Activated CD4-positive, alpha-beta memory T cell treated with anti-CD3 and anti-CD28 coated beads, Interleukin-2, amount 10 ng/mL, durations not matched to agents 7 days and 5 days (primary cell): ENCODE measurements at regions of chr6 and their contacts with region 1.

Region 1: GRCh38 chr6:26216356-26216885 is 129.2 kb downstream of the HFE start:
- DNase-seq: peak; percentile 90
- H3K4me3 Mint-ChIP-seq: no peak overlapping the region
- H3K27ac Mint-ChIP-seq: no peak overlapping the region
- H3K4me1 Mint-ChIP-seq: peaks cover 28% of the 10 kb centered on the region
- H3K27me3 Mint-ChIP-seq: no peaks in the 10 kb centered on the region

Region 2: GRCh38 chr6:26031595-26032339 is 184.7 kb before region 1 on chr6:
- CTCF ChIA-PET with region 1: interaction called, 3 read pairs
- POLR2A ChIA-PET with region 1: interaction called, 39 read pairs
- DNase-seq: peak; percentile 92
- H3K4me3 Mint-ChIP-seq: peak overlapping the region; percentile 84
- H3K27ac Mint-ChIP-seq: peak overlapping the region; percentile 100
- H3K4me1 Mint-ChIP-seq: peaks cover 74% of the 10 kb centered on the region
- H3K27me3 Mint-ChIP-seq: peaks cover 4% of the 10 kb centered on the region

Region 3: DNA sequence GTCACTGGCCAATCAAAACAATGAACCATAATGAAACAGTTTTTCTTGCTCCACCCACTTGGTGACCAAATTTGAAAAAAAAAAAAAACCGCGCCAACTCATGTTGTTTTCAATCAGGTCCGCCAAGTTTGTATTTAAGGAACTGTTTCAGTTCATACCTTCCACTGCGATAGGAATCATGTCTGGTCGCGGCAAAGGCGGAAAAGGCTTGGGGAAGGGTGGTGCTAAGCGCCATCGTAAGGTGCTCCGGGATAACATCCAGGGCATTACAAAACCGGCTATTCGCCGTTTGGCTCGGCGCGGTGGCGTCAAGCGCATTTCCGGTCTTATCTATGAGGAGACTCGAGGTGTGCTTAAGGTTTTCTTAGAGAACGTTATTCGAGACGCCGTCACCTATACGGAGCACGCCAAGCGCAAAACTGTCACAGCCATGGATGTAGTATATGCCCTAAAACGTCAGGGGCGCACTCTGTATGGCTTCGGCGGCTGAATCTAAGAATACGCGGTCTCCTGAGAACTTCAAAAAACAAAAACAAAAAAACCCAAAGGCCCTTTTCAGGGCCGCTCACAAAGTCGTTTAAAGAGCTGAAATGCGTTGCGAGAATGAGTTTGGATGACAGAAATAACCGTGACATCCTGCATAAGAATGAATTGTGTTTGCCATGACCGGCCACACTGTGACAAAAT is 112.5 kb before region 1 on chr6:
- CTCF ChIA-PET with region 1: no interaction called
- POLR2A ChIA-PET with region 1: interaction called, 14 read pairs
- DNase-seq: peak; percentile 93
- H3K4me3 Mint-ChIP-seq: peak overlapping the region; percentile 80
- H3K27ac Mint-ChIP-seq: peak overlapping the region; percentile 99
- H3K4me1 Mint-ChIP-seq: peaks cover 23% of the 10 kb centered on the region
- H3K27me3 Mint-ChIP-seq: no peaks in the 10 kb centered on the region

Region 4: GRCh38 chr6:26183581-26184366 is 32.6 kb before region 1 on chr6:
- CTCF ChIA-PET with region 1: interaction called, 15 read pairs
- POLR2A ChIA-PET with region 1: interaction called, 232 read pairs
- DNase-seq: peak; percentile 78
- H3K4me3 Mint-ChIP-seq: peak overlapping the region; percentile 75
- H3K27ac Mint-ChIP-seq: peak overlapping the region; percentile 92
- H3K4me1 Mint-ChIP-seq: peaks cover 71% of the 10 kb centered on the region
- H3K27me3 Mint-ChIP-seq: no peaks in the 10 kb centered on the region

Region 5: GRCh38 chr6:26204332-26205165 is 11.9 kb before region 1 on chr6:
- CTCF ChIA-PET with region 1: interaction called, 23 read pairs
- POLR2A ChIA-PET with region 1: interaction called, 812 read pairs
- DNase-seq: peak; percentile 90
- H3K4me3 Mint-ChIP-seq: no peak overlapping the region
- H3K27ac Mint-ChIP-seq: no peak overlapping the region
- H3K4me1 Mint-ChIP-seq: peaks cover 35% of the 10 kb centered on the region
- H3K27me3 Mint-ChIP-seq: no peaks in the 10 kb centered on the region

Region 6: DNA sequence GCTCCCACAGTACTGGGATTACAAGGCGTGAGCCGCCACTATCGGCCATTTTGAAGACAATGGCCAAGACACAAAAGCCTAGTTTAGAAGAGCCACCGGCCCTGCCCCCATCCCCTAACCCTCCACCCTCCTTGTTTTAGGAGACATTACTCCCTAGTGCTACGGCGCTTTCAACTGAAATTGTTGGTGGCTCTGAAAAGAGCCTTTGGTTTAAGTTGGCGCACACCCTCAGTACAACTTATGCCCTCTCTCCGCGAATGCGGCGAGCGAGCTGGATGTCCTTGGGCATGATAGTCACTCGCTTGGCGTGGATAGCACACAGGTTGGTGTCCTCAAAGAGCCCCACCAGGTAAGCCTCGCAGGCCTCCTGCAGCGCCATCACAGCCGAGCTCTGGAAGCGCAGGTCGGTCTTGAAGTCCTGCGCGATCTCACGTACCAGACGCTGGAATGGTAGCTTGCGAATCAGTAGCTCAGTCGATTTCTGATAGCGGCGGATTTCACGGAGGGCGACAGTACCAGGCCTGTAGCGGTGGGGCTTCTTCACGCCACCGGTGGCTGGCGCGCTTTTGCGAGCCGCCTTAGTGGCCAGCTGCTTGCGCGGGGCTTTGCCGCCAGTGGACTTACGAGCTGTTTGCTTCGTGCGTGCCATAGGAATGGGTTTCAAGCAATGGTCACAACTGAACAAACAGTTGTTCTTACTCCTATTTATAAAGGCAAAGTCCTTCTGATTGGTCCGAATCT is 33.7 kb after region 1 on chr6:
- CTCF ChIA-PET with region 1: interaction called, 34 read pairs
- POLR2A ChIA-PET with region 1: interaction called, 49 read pairs
- DNase-seq: peak; percentile 84
- H3K4me3 Mint-ChIP-seq: peak overlapping the region; percentile 90
- H3K27ac Mint-ChIP-seq: peak overlapping the region; percentile 93
- H3K4me1 Mint-ChIP-seq: peaks cover 42% of the 10 kb centered on the region
- H3K27me3 Mint-ChIP-seq: no peaks in the 10 kb centered on the region

Region 7: GRCh38 chr6:26623339-26623859 is 407.0 kb after region 1 on chr6:
- CTCF ChIA-PET with region 1: no interaction called
- POLR2A ChIA-PET with region 1: no interaction called
- DNase-seq: no peak
- H3K4me3 Mint-ChIP-seq: no peak overlapping the region
- H3K27ac Mint-ChIP-seq: no peak overlapping the region
- H3K4me1 Mint-ChIP-seq: no peaks in the 10 kb centered on the region
- H3K27me3 Mint-ChIP-seq: peaks cover 4% of the 10 kb centered on the region

Region 8: DNA sequence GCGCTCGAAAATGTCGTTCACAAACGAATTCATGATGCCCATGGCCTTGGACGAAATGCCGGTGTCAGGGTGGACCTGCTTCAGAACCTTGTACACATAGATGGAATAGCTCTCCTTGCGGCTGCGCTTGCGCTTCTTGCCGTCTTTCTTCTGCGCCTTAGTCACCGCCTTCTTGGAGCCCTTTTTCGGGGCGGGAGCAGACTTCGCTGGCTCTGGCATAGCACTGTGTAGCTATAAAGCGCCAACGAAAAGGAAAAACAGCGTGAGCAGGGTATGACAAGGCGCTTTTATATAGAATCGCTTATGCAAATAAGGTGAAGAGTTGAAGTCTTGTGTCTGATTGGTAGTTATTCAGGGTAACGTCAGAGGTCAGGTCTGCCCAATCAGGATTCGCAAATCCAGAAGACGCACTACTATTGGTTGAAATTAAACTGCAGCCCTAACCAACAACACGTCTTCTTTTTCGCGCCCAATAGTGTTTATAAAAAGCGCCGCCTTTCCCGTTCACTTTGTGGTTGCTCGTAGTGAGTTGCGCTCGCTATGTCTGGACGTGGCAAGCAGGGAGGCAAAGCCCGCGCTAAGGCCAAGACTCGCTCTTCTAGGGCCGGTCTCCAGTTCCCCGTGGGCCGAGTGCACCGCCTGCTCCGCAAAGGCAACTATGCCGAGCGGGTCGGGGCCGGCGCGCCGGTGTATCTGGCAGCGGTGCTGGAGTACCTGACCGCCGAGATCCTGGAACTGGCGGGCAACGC is 916.3 kb after region 1 on chr6:
- CTCF ChIA-PET with region 1: no interaction called
- POLR2A ChIA-PET with region 1: interaction called, 25 read pairs
- DNase-seq: peak; percentile 95
- H3K4me3 Mint-ChIP-seq: no peak overlapping the region
- H3K27ac Mint-ChIP-seq: no peak overlapping the region
- H3K4me1 Mint-ChIP-seq: peaks cover 60% of the 10 kb centered on the region
- H3K27me3 Mint-ChIP-seq: no peaks in the 10 kb centered on the region